Upper lobe of right lung (tissue), 1 donor: ENCODE measurements at regions of chr12 and their contacts with region 1.

Region 1: DNA sequence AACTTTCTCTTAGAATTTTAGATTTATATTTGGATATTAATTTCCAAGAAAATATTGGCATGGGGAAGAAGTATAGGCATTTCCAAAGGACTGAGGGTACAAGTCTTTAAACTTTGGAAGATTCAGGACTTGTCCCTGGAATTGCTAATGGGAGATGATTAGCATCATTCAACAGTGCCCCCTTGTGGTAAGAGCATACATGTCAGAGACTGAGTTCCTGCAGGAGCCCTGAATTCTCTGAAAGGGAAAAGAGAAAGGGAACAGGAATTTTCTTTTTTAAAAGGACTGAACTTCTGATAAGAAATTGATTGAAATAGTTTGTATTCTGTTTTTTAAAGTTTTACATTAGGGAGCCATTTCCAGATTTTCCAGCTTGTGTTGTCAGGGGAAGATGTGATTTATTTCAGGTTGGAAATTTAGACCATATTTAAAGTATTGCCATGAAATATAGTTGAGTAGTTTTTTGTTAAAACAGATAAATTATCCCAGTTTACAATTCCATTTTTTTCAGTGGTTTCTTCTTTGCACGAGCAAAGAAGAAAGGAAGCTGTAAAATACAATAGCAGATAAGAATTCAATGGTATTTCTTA is 44.0 kb upstream of the REP15 start:
- DNase-seq: no peak
- ATAC-seq: peak; percentile 91
- H3K4me3 ChIP-seq: no peak overlapping the region
- H3K27ac ChIP-seq: no peak overlapping the region
- H3K4me1 ChIP-seq: no peaks in the 10 kb centered on the region
- H3K27me3 ChIP-seq: no peaks in the 10 kb centered on the region
- CTCF ChIP-seq: peak; percentile 92

Region 2: DNA sequence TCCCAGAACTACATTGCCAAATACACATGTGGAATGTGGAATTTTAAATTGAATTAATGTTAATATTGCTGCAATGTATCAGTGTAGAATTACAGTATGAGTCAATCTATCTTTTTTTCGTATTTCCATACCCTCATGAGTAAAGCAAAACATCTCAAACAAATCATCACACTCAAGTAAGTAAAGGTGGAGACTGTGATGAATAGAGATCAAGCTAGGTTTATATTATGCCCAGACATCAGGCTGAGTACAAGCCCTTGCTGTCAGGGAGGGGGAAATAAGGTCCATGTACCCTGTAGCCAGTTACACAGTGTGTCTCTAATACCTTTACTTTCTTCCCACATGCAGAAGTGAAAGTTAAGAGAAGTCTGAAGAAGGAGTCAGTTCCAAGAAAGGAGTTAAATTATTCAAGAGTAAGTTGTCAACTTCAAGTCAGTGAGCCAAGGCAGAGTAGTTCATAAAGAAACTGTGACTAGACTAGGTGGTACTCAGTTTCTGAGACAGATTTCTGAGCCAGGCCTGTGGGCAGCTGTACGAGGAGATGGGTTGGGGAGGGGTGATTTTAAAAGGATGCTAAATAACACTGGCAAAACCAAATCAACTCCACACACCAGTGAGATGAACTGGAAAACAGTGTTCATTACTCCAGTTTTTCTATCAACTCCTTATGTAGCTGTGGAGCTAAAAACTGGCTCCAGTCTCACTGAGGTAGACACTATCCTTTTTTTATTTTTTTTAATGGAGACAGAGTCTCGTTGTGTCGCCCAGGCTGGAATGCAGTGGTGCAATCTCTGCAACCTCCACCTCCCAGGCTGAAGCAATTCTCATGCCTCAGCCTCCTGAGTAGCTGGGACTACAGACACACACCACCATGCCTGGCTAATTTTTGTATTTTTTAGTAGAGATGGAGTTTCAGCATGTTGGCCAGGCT is 431.9 kb before region 1 on chr12:
- intact Hi-C with region 1: no loop called
- DNase-seq: no peak
- ATAC-seq: no peak
- H3K4me3 ChIP-seq: no peak overlapping the region
- H3K27ac ChIP-seq: no peak overlapping the region
- H3K4me1 ChIP-seq: no peaks in the 10 kb centered on the region
- H3K27me3 ChIP-seq: no peaks in the 10 kb centered on the region
- CTCF ChIP-seq: no peak

Region 3: DNA sequence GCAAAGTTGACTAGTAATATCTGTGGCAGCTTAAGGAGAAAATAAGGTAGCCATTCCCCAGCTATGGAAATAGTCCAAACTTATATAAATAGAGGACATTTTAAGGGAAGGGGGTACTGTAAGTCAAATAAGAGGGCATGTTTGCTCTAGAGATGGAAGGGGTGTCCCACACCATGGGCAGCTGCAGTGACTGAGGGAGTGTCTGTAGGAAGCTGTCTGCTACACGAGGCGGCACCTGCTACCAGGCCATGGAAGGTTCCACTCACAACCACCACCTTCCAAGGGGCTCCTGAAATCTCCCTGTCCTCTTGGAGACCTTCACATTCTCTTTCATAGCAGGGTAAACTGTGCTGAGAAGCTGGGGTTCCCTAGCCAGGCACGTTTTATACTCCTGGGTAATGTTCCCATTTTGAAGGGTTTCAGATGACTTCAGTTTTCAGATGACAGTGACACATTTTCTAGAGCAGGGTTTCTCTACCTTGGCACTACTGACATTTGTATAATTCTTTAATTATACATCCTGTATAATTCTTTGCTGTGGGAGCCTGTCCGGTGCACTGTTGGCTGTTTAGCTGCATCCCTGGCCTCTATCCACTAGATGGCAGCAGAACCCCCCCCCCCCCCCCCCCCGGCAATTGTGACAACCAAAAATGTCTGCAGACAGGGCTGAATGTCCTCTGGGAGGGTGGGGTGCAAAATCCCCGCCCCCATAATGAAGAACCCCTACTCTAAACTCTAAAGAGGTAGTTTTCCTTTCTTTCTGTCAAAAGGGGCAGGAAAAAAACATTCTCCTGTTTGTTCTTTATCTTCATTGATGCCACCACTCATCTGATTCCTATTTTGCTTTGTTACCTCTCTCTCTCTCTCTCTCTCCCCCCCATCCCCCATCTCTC is 217.3 kb before region 1 on chr12:
- intact Hi-C with region 1: loop called (anchors 10 kb)
- DNase-seq: no peak
- ATAC-seq: peak; percentile 81
- H3K4me3 ChIP-seq: no peak overlapping the region
- H3K27ac ChIP-seq: no peak overlapping the region
- H3K4me1 ChIP-seq: no peaks in the 10 kb centered on the region
- H3K27me3 ChIP-seq: no peaks in the 10 kb centered on the region
- CTCF ChIP-seq: peak; percentile 61

Region 4: GRCh38 chr12:27732281-27732680 is 80.0 kb after region 1 on chr12:
- intact Hi-C with region 1: no loop called
- DNase-seq: no peak
- ATAC-seq: no peak
- H3K4me3 ChIP-seq: no peak overlapping the region
- H3K27ac ChIP-seq: no peak overlapping the region
- H3K4me1 ChIP-seq: no peaks in the 10 kb centered on the region
- H3K27me3 ChIP-seq: no peaks in the 10 kb centered on the region
- CTCF ChIP-seq: no peak

Region 5: GRCh38 chr12:28057856-28058615 is 405.8 kb after region 1 on chr12:
- intact Hi-C with region 1: no loop called
- DNase-seq: no peak
- ATAC-seq: no peak
- H3K4me3 ChIP-seq: no peak overlapping the region
- H3K27ac ChIP-seq: no peak overlapping the region
- H3K4me1 ChIP-seq: no peaks in the 10 kb centered on the region
- H3K27me3 ChIP-seq: no peaks in the 10 kb centered on the region
- CTCF ChIP-seq: no peak